Right cardiac atrium (tissue), 5 donors: ENCODE measurements at regions of chr18 and their contacts with region 1.

Region 1: GRCh38 chr18:67104700-67105284 is 411.7 kb downstream of the DSEL start:
- DNase-seq: peak; percentile 43 to 80 (median 47)
- ATAC-seq: peak; percentile 81 to 82
- H3K4me3 ChIP-seq: no peak overlapping the region
- H3K27ac ChIP-seq: no peak overlapping the region
- H3K4me1 ChIP-seq: no peaks in the 10 kb centered on the region
- H3K27me3 ChIP-seq: no peaks in the 10 kb centered on the region

Region 2: DNA sequence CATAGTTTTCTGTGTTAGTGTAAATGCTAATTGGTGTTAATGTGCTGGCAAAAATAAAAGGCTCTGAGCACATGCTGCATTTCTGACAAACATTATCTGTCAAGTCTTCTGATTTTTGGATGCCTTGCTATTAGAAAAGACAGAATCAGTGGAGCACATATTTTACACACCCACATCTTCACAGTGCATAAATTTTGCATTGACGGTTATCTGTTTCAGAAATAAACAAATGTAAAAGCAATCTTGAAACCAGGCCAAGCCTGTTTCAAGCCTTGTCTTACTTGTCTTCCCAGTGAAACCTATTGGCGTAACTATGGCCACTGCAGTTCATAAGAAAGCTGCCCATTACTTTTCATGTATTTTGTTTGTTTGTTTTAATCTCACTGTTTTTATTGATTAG is 167.2 kb before region 1 on chr18:
- intact Hi-C with region 1: no loop called
- DNase-seq: no peak
- ATAC-seq: no peak
- H3K4me3 ChIP-seq: no peak overlapping the region
- H3K27ac ChIP-seq: no peak overlapping the region
- H3K4me1 ChIP-seq: no peaks in the 10 kb centered on the region
- H3K27me3 ChIP-seq: no peaks in the 10 kb centered on the region

Region 3: GRCh38 chr18:66999003-66999402 is 105.8 kb before region 1 on chr18:
- intact Hi-C with region 1: no loop called
- DNase-seq: no peak
- ATAC-seq: no peak
- H3K4me3 ChIP-seq: no peak overlapping the region
- H3K27ac ChIP-seq: no peak overlapping the region
- H3K4me1 ChIP-seq: no peaks in the 10 kb centered on the region
- H3K27me3 ChIP-seq: no peaks in the 10 kb centered on the region

Region 4: DNA sequence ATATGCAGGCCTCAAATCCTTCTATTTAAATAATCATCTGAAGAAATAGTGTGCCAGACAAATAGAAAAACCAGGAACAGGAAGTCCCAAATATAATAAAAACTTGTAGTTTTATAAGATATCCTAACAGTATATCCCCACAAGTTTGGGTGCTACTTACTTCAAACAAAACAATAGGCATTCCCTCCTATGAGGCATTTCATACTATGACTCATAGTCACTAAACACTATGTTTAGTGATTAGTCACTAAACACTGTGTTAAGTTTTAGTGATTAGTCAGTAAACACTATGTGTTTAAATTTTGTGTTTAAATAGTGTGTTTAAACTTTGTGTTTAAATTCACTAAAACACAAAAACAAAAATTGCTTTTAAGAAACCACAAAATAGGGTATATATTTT is 93.9 kb before region 1 on chr18:
- intact Hi-C with region 1: no loop called
- DNase-seq: no peak
- ATAC-seq: no peak
- H3K4me3 ChIP-seq: no peak overlapping the region
- H3K27ac ChIP-seq: no peak overlapping the region
- H3K4me1 ChIP-seq: no peaks in the 10 kb centered on the region
- H3K27me3 ChIP-seq: no peaks in the 10 kb centered on the region

Region 5: DNA sequence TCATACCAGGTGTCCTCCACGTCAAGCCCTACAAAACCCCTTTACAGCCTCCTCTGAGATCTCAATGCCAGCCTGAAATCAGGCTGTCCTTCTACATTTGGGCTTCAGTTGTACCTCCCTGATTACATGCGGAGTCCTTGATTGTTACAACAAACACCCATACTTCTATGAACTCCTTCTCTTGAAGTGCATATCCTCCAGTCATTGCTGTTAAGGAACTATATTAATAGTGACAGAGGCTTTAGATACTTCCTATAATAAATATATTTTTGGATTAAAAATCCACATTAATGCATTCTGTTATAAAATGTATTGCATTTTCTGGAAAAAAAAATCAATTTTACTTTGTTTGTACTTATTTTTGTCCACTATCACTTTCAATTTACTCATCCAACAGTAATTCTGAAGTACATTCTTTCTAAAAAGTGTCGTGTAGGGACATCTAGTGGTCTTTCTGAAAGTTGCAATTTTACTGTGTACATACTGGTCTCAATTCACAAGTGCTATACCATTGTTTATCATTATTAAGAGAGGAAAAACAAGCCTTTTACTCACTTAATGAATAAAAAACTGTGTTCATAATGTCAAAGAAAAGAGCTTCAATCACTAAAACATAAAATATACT is 95.3 kb after region 1 on chr18:
- intact Hi-C with region 1: loop called in 2 of 4 experiments (anchors 5 to 10 kb)
- DNase-seq: no peak
- ATAC-seq: peak; percentile 59 to 60
- H3K4me3 ChIP-seq: no peak overlapping the region
- H3K27ac ChIP-seq: no peak overlapping the region
- H3K4me1 ChIP-seq: no peaks in the 10 kb centered on the region
- H3K27me3 ChIP-seq: no peaks in the 10 kb centered on the region